Breast epithelium (tissue), 4 donors: ENCODE measurements at regions of chr3 and their contacts with region 1.

Region 1: DNA sequence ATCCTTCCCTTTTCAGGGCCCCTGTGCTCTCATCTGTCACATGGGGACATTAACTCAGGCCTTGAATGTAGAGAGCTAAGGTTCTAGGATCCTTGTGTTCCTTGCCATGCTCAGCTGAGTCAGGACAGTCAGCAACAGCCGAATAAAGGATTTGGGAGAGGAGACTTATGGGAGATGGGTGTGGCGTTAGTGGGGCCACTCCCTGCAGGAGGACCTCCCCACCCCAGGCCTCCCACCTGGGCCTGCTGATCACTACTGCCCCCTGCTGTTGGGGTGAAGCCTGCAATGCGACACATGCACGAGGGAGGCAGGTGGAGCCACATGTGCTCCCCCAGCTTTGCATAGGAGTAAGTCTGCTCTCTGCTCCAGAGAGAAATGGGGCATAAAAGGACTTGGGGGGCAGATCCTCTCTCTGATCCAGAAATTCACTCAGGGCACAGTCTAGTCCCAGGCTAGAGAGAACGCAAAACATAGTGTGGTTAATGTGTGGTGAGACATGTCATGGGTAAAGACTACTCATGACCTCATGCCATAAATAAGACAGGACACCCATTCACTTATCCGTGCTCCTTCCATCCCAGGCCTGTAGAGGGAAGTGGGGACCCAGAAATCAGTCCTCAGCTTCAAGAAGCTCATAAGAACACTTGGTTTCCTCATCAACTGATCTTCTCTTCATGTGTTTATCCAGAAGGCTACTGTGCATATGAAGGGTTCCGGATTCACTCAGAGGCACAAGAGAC is 19.4 kb downstream of the RBP1 start:
- DNase-seq: no peak
- H3K4me3 ChIP-seq: no peak overlapping the region
- H3K27ac ChIP-seq: no peak overlapping the region
- H3K4me1 ChIP-seq: no peaks in the 10 kb centered on the region
- H3K27me3 ChIP-seq: no peaks in the 10 kb centered on the region
- CTCF ChIP-seq: no peak
- POLR2A ChIP-seq: no peak

Region 2: GRCh38 chr3:139561959-139562676 is 42.0 kb after region 1 on chr3:
- intact Hi-C with region 1: no loop called
- DNase-seq: no peak
- H3K4me3 ChIP-seq: no peak overlapping the region
- H3K27ac ChIP-seq: peak overlapping the region; percentile 23 to 42
- H3K4me1 ChIP-seq: no peaks in the 10 kb centered on the region
- H3K27me3 ChIP-seq: no peaks in the 10 kb centered on the region
- CTCF ChIP-seq: peak; percentile 61 to 81 (median 63)
- POLR2A ChIP-seq: no peak

Region 3: GRCh38 chr3:140763532-140763931 is 1243.4 kb after region 1 on chr3:
- intact Hi-C with region 1: loop called (anchors 5 kb)
- DNase-seq: no peak
- H3K4me3 ChIP-seq: no peak overlapping the region
- H3K27ac ChIP-seq: no peak overlapping the region
- H3K4me1 ChIP-seq: no peaks in the 10 kb centered on the region
- H3K27me3 ChIP-seq: no peaks in the 10 kb centered on the region
- CTCF ChIP-seq: no peak
- POLR2A ChIP-seq: no peak

Region 4: GRCh38 chr3:141114816-141115460 is 1594.8 kb after region 1 on chr3:
- intact Hi-C with region 1: no loop called
- DNase-seq: no peak
- H3K4me3 ChIP-seq: no peak overlapping the region
- H3K27ac ChIP-seq: peak overlapping the region; percentile 34 to 71
- H3K4me1 ChIP-seq: no peaks in the 10 kb centered on the region
- H3K27me3 ChIP-seq: no peaks in the 10 kb centered on the region
- CTCF ChIP-seq: peak in 1 of 3 donors; percentile 25
- POLR2A ChIP-seq: no peak

Region 5: DNA sequence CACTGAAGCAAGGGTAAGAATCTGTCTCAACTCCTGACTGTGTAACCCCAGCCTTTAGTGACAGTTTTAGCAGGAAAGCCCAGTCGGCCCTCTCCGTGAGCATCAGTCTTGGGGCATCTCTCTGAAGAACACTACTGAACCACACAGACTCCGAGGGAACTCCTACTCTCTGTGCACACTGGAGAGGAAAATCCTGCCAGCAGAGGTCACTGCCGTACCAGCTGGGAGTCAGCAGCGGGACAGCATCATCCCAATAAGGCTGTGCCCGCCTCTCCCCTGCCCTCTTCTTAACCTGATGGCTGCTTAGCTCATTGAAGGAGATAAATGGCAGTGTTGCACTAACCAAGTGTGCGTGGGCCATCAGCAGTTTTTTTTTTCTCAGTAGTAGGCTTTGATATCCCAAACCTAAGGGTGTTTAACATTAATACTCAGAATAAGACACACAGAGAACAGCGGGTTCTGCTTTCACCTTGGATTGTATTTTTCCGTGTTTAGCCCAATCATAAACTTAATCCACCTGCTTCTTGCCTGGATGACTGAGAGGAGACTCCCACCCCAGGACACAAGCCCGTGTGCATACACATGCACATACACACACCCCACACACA is 1940.0 kb after region 1 on chr3:
- intact Hi-C with region 1: no loop called
- DNase-seq: peak; percentile 83 to 86
- H3K4me3 ChIP-seq: no peak overlapping the region
- H3K27ac ChIP-seq: no peak overlapping the region
- H3K4me1 ChIP-seq: no peaks in the 10 kb centered on the region
- H3K27me3 ChIP-seq: no peaks in the 10 kb centered on the region
- CTCF ChIP-seq: peak in 2 of 3 donors; percentile 78 to 83
- POLR2A ChIP-seq: no peak